GM12878 (cell line): ENCODE measurements at regions of chr2 and their contacts with region 1.

Region 1: GRCh38 chr2:128716299-128716721 is 397.6 kb upstream of the HS6ST1 start:
- DNase-seq: no peak
- ATAC-seq: no peak
- H3K4me3 ChIP-seq: no peak overlapping the region
- H3K27ac ChIP-seq: no peak overlapping the region
- H3K4me1 ChIP-seq: no peaks in the 10 kb centered on the region
- H3K27me3 ChIP-seq: peaks cover 2 to 9% of the 10 kb centered on the region in 2 experiments
- CTCF ChIP-seq: no peak
- EP300 ChIP-seq: no peak
- POLR2A ChIP-seq: no peak
- RAD21 ChIP-seq: no peak

Region 2: GRCh38 chr2:128727914-128728313 is 11.6 kb after region 1 on chr2:
- CTCF ChIA-PET with region 1: interaction called, 6 read pairs
- POLR2A ChIA-PET with region 1: no interaction called
- RAD21 ChIA-PET with region 1: interaction called, 3 read pairs
- SMC1A ChIA-PET with region 1: interaction called, 13 read pairs
- in situ Hi-C with region 1: no loop called
- intact Hi-C with region 1: no loop called
- DNase-seq: no peak
- ATAC-seq: peak; percentile 75
- H3K4me3 ChIP-seq: no peak overlapping the region
- H3K27ac ChIP-seq: no peak overlapping the region
- H3K4me1 ChIP-seq: peaks cover 4% of the 10 kb centered on the region
- H3K27me3 ChIP-seq: no peaks in the 10 kb centered on the region
- CTCF ChIP-seq: no peak
- EP300 ChIP-seq: no peak; a peak in 1 of 4 replicates
- POLR2A ChIP-seq: no peak
- RAD21 ChIP-seq: no peak